Naive thymus-derived CD4-positive, alpha-beta T cell (primary cell): ENCODE measurements at regions of chr10 and their contacts with region 1.

Region 1: DNA sequence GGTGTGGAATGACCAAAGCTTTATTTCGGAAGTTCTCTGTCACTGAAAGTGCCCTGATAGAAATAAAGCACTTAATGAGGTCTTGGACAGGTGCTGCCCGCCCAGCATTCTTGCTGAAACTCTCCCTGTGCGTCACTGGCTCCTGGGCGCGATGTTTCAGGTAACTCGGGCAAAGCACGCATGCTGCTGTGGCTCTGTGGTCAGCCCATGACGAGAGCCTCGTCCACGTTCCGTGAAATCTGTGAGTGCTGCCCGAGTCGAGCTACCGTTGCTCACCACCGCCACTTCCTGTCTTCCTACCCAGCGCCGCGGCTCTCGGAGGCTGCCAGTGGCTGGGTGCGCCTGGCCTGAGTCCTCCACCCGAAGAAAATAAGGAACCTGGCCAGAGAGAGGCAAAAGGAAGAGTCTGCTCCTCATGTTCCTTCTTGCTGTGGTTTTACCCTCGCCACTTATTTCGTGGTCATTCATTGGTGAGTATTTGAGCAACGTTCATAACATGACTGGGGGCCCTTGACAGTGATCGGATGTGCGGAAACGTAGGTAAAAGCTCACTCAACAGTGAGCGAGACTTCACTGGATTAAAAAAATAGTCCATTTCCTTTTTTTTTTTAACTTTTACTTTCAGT is 95.5 kb downstream of the MAP3K8 start:
- DNase-seq: peak; percentile 58 to 86 (median 80)
- ATAC-seq: peak; percentile 90
- H3K4me3 ChIP-seq: peak overlapping the region; percentile 64
- H3K4me3 Mint-ChIP-seq: peak overlapping the region; percentile 84 to 96 (median 91)
- H3K27ac ChIP-seq: peak overlapping the region; percentile 82
- H3K27ac Mint-ChIP-seq: peak overlapping the region; percentile 96 to 99 (median 98)
- H3K4me1 ChIP-seq: peaks cover 40 to 65% of the 10 kb centered on the region in 2 donors
- H3K4me1 Mint-ChIP-seq: peaks cover 21 to 73% (median 55%) of the 10 kb centered on the region in 7 donors
- H3K27me3 ChIP-seq: no peaks in the 10 kb centered on the region
- H3K27me3 Mint-ChIP-seq: no peaks in the 10 kb centered on the region

Region 2: GRCh38 chr10:30027057-30028005 is 502.2 kb before region 1 on chr10:
- CTCF ChIA-PET with region 1: interaction called, 3 read pairs
- POLR2A ChIA-PET with region 1: interaction called, 8 read pairs
- intact Hi-C with region 1: loop called in 1 of 2 experiments (anchors 1 kb)
- DNase-seq: peak; percentile 63 to 98 (median 95)
- ATAC-seq: peak; percentile 97
- H3K4me3 ChIP-seq: peak overlapping the region; percentile 50
- H3K4me3 Mint-ChIP-seq: peak overlapping the region; percentile 63 to 94 (median 82)
- H3K27ac ChIP-seq: no peak overlapping the region
- H3K27ac Mint-ChIP-seq: peak overlapping the region; percentile 75 to 98 (median 93)
- H3K4me1 ChIP-seq: peaks cover 27 to 29% of the 10 kb centered on the region in 2 donors
- H3K4me1 Mint-ChIP-seq: peaks cover 24 to 58% (median 40%) of the 10 kb centered on the region in 7 donors
- H3K27me3 ChIP-seq: peaks cover 8% of the 10 kb centered on the region in 2 donors
- H3K27me3 Mint-ChIP-seq: peaks cover 34 to 65% (median 53%) of the 10 kb centered on the region in 5 donors

Region 3: DNA sequence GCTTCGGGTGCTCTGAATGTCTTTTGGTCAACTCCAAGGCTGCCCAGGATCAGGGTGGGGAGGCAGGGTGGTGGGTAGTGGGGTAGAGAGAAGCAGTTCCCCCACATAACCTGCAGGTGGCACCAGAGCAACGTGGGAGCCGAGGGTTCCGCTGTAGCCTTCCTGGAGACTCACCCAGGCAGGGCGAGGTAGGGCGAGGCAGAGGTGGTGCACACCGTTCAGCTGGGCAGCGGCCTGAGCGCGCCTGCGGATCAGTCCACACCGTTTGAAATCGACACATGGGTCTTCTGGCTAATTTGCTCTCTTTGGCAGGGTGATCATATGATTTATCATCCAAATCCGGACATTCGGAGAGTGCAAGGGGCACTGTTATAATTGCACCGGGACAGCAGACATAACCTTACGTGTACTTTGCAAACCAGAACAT is 136.9 kb before region 1 on chr10:
- CTCF ChIA-PET with region 1: interaction called, 38 read pairs
- POLR2A ChIA-PET with region 1: interaction called, 4 read pairs
- intact Hi-C with region 1: loop called (anchors 1 kb)
- DNase-seq: peak; percentile 45 to 80 (median 66)
- ATAC-seq: peak; percentile 99
- H3K4me3 ChIP-seq: no peak overlapping the region
- H3K4me3 Mint-ChIP-seq: peak overlapping the region in 2 of 10 donors; percentile 18 to 57
- H3K27ac ChIP-seq: no peak overlapping the region
- H3K27ac Mint-ChIP-seq: peak overlapping the region in 1 of 9 donors; percentile 47
- H3K4me1 ChIP-seq: peaks cover 0 to 5% of the 10 kb centered on the region in 2 donors
- H3K4me1 Mint-ChIP-seq: peaks cover 0 to 4% (median 3%) of the 10 kb centered on the region in 7 donors
- H3K27me3 ChIP-seq: no peaks in the 10 kb centered on the region
- H3K27me3 Mint-ChIP-seq: peaks cover 0 to 42% (median 6%) of the 10 kb centered on the region in 5 donors

Region 4: DNA sequence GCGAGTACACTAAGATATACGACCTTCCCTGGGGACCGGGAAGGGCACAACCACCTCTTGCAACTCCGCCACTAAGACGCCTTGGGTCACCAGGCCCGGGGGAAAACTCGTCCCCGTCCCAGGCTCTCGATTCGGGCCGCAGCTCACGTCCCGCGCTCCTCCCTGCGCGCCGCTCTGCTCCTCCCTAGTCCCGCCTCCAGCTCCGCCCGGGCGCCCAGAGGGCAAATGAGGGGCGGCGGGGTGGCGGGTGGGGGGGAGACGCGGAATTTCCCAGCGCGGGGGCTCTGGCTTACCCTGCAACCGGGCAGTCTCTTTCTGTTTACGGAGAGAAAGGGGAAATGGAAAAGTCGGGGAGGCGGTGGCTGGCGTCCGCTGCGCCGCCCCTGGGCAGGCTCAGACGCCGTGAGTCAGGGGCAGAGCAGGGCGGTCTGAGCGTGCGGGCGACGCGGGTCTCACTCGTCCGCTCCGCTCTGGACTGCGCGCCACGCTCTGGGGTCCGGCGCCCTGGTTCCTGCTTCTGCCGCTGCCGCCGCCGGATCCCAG is 95.7 kb before region 1 on chr10 and contains the start of gene MAP3K8:
- CTCF ChIA-PET with region 1: interaction called, 5 read pairs
- POLR2A ChIA-PET with region 1: interaction called, 22 read pairs
- intact Hi-C with region 1: loop called (anchors 1 kb)
- DNase-seq: peak; percentile 52 to 92 (median 59)
- ATAC-seq: peak; percentile 86
- H3K4me3 ChIP-seq: peak within 1 kb of the TSS; percentile 69
- H3K4me3 Mint-ChIP-seq: peak within 1 kb of the TSS; percentile 82 to 93 (median 89)
- H3K27ac ChIP-seq: peak within 1 kb of the TSS; percentile 68
- H3K27ac Mint-ChIP-seq: peak within 1 kb of the TSS; percentile 23 to 94 (median 70)
- H3K4me1 ChIP-seq: peaks cover 21 to 22% of the 10 kb centered on the region in 2 donors
- H3K4me1 Mint-ChIP-seq: peaks cover 37 to 62% (median 46%) of the 10 kb centered on the region in 7 donors
- H3K27me3 ChIP-seq: no peaks in the 10 kb centered on the region
- H3K27me3 Mint-ChIP-seq: no peaks in the 10 kb centered on the region
- total RNA-seq, gene MAP3K8: 0.70 to 102 (median 31.2) TPM

Region 5: DNA sequence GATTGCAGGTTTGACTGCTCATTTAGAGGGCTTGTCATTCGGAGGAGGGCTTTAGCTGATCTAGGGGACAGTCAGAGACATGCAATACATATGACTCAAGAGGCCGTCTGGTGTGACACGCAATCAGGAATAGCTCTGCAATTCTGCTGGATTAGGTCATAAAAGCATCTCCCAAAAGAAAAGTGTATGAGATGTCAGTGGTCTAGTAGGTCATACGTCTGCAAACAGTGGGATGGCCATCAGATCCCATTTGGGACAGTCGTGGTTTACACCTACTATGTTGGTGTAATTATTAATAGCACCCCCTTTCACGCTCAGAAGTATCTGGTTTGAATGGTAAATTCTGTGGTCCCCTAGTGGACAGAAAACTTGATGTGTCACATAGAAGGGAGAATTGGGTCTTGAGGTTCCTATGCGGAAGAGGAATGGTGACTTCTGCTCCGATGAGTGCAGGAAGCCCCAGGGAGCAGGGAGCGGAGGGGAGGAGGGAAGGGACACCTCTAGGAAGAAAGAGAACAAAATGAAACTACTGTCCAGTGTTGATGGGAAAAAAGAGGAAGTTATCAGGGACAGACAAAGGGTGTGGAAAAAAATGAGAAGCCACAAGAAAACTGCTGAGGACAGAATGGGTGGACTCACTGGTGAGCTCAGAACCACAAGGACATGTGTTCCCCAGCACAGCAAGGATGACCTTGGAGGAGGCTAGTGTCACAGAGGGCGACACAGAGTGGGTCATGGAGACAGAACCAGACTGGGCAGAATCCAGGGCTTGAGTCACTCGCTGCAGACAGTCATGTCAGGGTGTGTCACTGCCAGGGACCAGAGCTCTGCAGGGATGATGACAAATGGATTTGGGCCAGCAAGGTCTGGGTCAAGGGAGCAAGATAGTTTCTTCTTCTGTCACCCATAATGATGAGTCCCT is 35.6 kb before region 1 on chr10:
- CTCF ChIA-PET with region 1: interaction called, 3 read pairs
- POLR2A ChIA-PET with region 1: interaction called, 3 read pairs
- intact Hi-C with region 1: loop called (anchors 1 to 5 kb)
- DNase-seq: peak in 1 of 9 donors; percentile 23
- ATAC-seq: peak; percentile 89
- H3K4me3 ChIP-seq: no peak overlapping the region
- H3K4me3 Mint-ChIP-seq: peak overlapping the region in 1 of 10 donors; percentile 33
- H3K27ac ChIP-seq: no peak overlapping the region
- H3K27ac Mint-ChIP-seq: peak overlapping the region in 4 of 9 donors; percentile 38 to 60 (median 43)
- H3K4me1 ChIP-seq: peaks cover 12 to 53% of the 10 kb centered on the region in 2 donors
- H3K4me1 Mint-ChIP-seq: peaks cover 37 to 78% (median 53%) of the 10 kb centered on the region in 7 donors
- H3K27me3 ChIP-seq: no peaks in the 10 kb centered on the region
- H3K27me3 Mint-ChIP-seq: peaks cover 0 to 18% (median 0%) of the 10 kb centered on the region in 5 donors

Region 6: DNA sequence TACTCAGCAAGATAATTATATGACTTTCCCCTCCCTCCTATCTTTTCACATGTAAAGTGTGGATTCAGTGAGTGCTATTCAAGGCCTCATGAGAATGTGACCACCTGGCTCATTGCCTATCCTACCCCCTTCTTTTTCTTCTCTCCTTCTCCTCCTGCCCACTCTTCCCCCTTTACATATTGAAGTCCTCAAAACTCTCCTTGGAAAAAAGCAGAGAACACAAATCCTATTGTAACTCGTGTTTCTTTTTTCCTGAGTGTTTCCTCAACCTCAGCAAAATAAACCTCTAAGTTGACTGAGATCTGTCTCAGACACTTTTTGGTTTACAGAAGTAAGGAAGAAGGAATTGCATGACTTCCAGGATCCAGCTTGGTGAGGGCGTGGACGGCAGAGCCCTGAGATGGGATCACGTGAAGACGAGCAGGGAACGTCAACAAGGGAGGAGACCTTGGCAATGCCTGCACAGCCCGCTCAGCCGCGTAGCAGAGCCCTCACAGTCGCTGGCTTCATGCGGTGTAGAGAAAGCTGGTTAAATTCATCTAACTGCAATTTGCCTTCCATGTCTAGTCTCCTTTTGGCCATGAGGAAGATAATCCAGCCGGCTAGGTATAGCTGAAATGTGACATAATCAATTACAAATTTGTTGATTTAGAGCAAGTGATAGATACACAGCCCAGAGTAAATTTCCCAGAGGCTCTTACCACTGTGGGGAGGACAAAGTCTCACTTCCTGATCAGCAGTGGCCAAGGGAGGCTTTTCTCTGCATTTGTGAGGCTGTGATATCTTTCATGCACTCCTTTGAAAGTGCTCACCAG is 24.3 kb after region 1 on chr10:
- CTCF ChIA-PET with region 1: no interaction called
- POLR2A ChIA-PET with region 1: no interaction called
- intact Hi-C with region 1: no loop called
- DNase-seq: no peak
- ATAC-seq: no peak
- H3K4me3 ChIP-seq: no peak overlapping the region
- H3K4me3 Mint-ChIP-seq: no peak overlapping the region
- H3K27ac ChIP-seq: no peak overlapping the region
- H3K27ac Mint-ChIP-seq: no peak overlapping the region
- H3K4me1 ChIP-seq: no peaks in the 10 kb centered on the region
- H3K4me1 Mint-ChIP-seq: peaks cover 0 to 9% (median 5%) of the 10 kb centered on the region in 7 donors
- H3K27me3 ChIP-seq: no peaks in the 10 kb centered on the region
- H3K27me3 Mint-ChIP-seq: peaks cover 0 to 14% (median 0%) of the 10 kb centered on the region in 5 donors

Region 7: GRCh38 chr10:30701451-30702173 is 172.1 kb after region 1 on chr10:
- CTCF ChIA-PET with region 1: no interaction called
- POLR2A ChIA-PET with region 1: no interaction called
- intact Hi-C with region 1: loop called in 1 of 2 experiments (anchors 5 kb)
- DNase-seq: peak in 8 of 9 donors; percentile 68 to 81 (median 74)
- ATAC-seq: peak; percentile 80
- H3K4me3 ChIP-seq: peak overlapping the region; percentile 31
- H3K4me3 Mint-ChIP-seq: peak overlapping the region; percentile 68 to 98 (median 88)
- H3K27ac ChIP-seq: peak overlapping the region; percentile 86
- H3K27ac Mint-ChIP-seq: peak overlapping the region; percentile 88 to 98 (median 96)
- H3K4me1 ChIP-seq: peaks cover 63 to 74% of the 10 kb centered on the region in 2 donors
- H3K4me1 Mint-ChIP-seq: peaks cover 51 to 97% (median 88%) of the 10 kb centered on the region in 7 donors
- H3K27me3 ChIP-seq: no peaks in the 10 kb centered on the region
- H3K27me3 Mint-ChIP-seq: no peaks in the 10 kb centered on the region